ENCODE measurements at regions of chr18 and their contacts with region 1.

Region 1: DNA sequence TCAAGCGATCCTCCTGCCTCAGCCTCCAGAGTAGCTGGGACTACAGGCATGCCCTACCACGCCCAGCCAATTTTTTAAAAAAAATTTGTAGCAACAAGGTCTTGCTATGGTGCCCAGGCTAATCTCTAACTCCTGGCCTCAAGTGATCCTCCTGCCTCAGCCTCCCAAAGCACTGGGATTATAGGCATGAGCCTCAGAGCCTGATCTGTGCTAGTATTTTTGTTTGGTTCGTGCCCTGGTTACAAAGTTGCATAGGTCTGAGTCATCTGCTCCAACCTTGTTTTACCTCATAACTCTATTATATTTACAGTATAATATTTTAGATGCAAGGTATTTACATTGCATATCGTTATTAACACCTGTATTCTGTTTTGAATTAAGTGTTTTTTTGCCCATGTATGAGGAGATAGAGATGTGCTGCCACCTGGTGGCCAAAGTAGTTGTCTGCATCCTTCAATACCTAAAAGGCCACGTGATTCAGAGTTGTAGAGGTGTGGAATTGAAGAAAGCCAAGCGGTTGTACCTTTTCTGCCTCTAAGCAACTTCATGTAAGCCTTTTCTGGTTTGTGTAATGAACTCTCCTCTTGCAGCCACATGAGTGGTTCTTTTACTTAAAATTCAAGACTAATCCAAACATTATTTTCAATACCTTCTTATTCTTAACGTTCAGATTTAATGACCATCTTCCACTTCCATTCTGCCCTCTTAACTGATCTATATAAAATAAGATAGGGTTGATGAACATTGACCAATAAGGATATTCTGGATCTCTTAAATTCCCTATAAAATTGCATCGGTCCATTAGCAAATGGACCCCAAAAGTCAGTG is 19.9 kb upstream of the CABYR start:
- DNase-seq: peak; percentile 91
- H3K4me3 Mint-ChIP-seq: no peak overlapping the region
- H3K27ac Mint-ChIP-seq: no peak overlapping the region
- H3K4me1 Mint-ChIP-seq: peaks cover 14% of the 10 kb centered on the region
- H3K27me3 Mint-ChIP-seq: no peaks in the 10 kb centered on the region

Region 2: GRCh38 chr18:23619388-23619881 is 499.5 kb before region 1 on chr18:
- intact Hi-C with region 1: loop called (anchors 1 kb)
- DNase-seq: peak; percentile 65
- H3K4me3 Mint-ChIP-seq: peak overlapping the region; percentile 39
- H3K27ac Mint-ChIP-seq: no peak overlapping the region
- H3K4me1 Mint-ChIP-seq: peaks cover 13% of the 10 kb centered on the region
- H3K27me3 Mint-ChIP-seq: peaks cover 50% of the 10 kb centered on the region

Region 3: GRCh38 chr18:23828426-23828825 is 290.5 kb before region 1 on chr18:
- intact Hi-C with region 1: loop called (anchors 5 kb)
- DNase-seq: peak; percentile 89
- H3K4me3 Mint-ChIP-seq: no peak overlapping the region
- H3K27ac Mint-ChIP-seq: peak overlapping the region; percentile 79
- H3K4me1 Mint-ChIP-seq: peaks cover 37% of the 10 kb centered on the region
- H3K27me3 Mint-ChIP-seq: peaks cover 3% of the 10 kb centered on the region

Region 4: GRCh38 chr18:23924813-23925212 is 194.2 kb before region 1 on chr18:
- intact Hi-C with region 1: no loop called
- DNase-seq: no peak
- H3K4me3 Mint-ChIP-seq: no peak overlapping the region
- H3K27ac Mint-ChIP-seq: no peak overlapping the region
- H3K4me1 Mint-ChIP-seq: peaks cover 29% of the 10 kb centered on the region
- H3K27me3 Mint-ChIP-seq: peaks cover 16% of the 10 kb centered on the region

Region 5: DNA sequence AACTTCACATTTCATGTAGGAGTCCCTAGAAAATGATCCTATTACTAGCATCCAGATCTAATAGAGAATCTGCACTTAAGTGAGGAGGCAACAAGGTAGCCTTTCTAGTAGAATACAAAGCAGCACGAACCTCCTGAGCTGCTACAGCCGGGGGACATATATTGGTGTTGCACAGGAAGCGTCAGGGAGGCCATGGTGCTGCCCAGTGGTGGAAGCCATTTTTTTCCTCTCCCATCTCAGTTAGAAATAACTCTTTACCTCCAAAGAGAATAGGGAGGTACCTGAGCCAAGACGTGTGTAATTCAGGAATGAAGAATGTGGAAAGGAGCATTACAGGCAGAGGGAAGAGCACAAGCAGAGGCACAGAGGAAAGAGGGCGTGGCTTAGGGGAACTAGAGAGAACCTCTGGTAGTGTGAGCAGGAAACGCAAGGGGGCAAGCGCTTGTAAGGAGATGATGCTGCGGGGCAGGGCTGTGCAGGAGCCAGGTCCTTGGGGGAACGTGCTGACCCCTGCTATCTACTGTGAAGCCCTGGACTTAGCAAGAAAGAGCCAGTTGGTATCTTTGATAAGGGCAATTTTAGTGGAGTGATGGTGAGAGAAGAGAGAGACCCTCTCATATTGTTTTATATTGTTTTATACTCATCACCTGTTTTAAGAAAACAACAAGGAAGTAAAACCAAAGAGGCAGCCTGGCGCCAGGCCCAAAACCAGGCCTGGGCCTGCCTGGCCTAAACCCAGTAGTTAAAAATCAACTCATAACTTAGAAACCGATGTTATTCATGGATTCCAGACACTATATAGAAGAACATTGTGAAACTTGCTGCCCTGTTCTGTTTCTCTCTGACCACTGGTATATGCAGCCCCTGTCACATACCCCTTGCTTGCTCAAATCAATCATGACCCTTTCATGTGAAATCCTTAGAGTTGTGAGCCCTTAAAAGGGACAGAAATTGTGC is 154.4 kb before region 1 on chr18:
- intact Hi-C with region 1: loop called (anchors 1 kb)
- DNase-seq: peak; percentile 77
- H3K4me3 Mint-ChIP-seq: peak overlapping the region; percentile 25
- H3K27ac Mint-ChIP-seq: peak overlapping the region; percentile 66
- H3K4me1 Mint-ChIP-seq: peaks cover 28% of the 10 kb centered on the region
- H3K27me3 Mint-ChIP-seq: peaks cover 19% of the 10 kb centered on the region

Region 6: GRCh38 chr18:24051031-24051947 is 67.7 kb before region 1 on chr18:
- intact Hi-C with region 1: loop called (anchors 5 kb)
- DNase-seq: peak; percentile 56
- H3K4me3 Mint-ChIP-seq: peak overlapping the region; percentile 64
- H3K27ac Mint-ChIP-seq: peak overlapping the region; percentile 86
- H3K4me1 Mint-ChIP-seq: peaks cover 58% of the 10 kb centered on the region
- H3K27me3 Mint-ChIP-seq: no peaks in the 10 kb centered on the region

Region 7: DNA sequence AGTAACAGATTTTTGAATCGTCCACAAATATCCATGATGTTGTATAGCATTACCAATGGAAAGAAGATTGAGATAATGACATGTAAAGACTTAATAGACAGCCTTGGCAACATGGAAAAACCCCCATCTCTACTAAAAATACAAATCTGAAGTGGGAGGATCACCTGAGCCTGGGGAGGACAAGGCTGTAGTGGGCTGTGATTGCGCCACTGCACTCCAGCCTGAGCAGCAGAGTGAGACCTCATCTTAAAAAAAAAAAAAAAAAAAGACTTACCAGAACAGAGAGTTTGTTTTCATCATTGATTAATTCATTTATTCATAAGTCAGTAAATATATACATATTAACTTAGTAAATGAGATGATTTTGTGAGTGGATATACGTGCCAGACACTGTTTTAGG is 285.6 kb after region 1 on chr18:
- intact Hi-C with region 1: no loop called
- DNase-seq: no peak
- H3K4me3 Mint-ChIP-seq: no peak overlapping the region
- H3K27ac Mint-ChIP-seq: no peak overlapping the region
- H3K4me1 Mint-ChIP-seq: peaks cover 8% of the 10 kb centered on the region
- H3K27me3 Mint-ChIP-seq: peaks cover 46% of the 10 kb centered on the region

Measured in activated CD4-positive, alpha-beta T cell treated with anti-CD3 and anti-CD28 coated beads, Interleukin-2, amount 10 ng/mL, durations not matched to agents 24 days and 14 days (primary cell).